Astrocyte of the cerebellum (primary cell): ENCODE measurements at regions of chr13 and their contacts with region 1.

Region 1: GRCh38 chr13:113489549-113490495 is 689 bp downstream of the DCUN1D2 start:
- DNase-seq: no peak
- H3K4me3 ChIP-seq: peak overlapping the region; percentile 83
- CTCF ChIP-seq: no peak

Region 2: DNA sequence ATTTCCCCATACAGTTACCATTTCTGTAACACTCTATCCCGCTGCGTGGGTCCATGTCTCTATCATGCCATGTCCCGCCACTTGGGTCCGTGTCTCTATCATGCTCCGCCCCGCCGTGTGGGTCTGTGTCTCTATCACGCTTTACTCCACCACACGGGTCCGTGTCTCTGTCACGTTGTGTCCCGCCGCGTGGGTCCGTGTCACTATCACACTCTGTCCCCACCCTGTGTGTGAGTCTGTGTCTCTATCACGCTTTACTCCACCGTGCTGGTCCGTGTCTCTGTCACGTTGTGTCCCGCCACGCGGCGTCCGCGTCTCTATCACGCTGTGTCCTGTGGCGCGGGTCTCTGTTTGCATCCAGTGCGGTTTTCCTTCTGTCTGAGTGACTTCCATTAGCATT is 48.2 kb before region 1 on chr13:
- in situ Hi-C with region 1: loop called (anchors 5 kb)
- DNase-seq: no peak
- H3K4me3 ChIP-seq: no peak overlapping the region
- CTCF ChIP-seq: no peak

Region 3: GRCh38 chr13:113534246-113534860 is 44.5 kb after region 1 on chr13:
- in situ Hi-C with region 1: no loop called
- DNase-seq: no peak
- H3K4me3 ChIP-seq: no peak overlapping the region
- CTCF ChIP-seq: no peak